ENCODE measurements at regions of chr4 and their contacts with region 1.

Region 1: DNA sequence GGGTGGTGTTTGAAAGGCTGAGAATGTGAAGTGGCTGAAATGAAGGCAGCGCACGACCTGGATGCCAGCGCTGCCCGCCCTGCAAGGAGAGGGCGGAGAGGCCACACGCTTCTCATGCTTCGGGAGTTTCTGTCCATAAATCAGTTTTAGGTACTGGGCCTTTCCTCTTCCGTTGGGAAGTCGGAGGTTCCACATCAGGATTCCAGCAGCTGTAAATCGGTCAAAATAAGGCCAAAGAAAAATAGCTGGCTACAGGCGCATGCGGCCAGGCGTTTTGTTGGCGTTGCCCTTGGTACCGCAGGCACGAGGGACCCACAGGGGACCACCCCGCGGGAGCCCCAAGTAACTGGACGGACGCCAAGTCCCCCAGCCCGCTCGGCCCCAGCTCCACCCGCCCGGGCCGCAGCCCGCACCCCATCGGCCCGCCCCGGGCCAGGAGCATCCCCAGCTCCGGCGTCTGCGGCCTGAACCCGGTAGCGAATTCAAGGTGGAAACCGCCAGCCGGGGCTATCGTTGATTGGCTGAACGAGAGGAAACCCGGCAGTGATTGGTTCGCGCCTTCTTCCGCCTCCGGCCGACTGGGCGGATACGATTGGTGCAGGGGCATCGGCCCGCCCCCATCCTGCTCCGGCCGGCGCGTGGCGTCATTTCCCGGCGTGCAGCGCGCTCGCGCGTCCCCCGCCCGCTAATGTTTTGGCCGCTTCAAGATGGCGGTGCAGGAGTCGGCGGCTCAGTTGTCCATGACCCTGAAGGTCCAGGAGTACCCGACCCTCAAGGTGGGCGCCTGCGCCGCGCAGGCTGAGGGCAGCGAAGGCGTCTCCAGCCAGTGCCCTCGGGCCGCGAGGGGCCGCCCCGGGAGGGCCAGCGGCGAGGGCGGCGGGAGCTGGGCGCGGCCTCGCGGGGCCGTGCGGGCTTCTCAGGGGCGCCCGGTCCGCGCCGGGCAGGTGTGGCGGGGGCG is at the start of gene MAEA:
- DNase-seq: peak; percentile 98
- H3K4me3 Mint-ChIP-seq: peak within 1 kb of the TSS; percentile 94
- H3K27ac Mint-ChIP-seq: peak within 1 kb of the TSS; percentile 90
- H3K4me1 Mint-ChIP-seq: peaks cover 39% of the 10 kb centered on the region
- H3K27me3 Mint-ChIP-seq: no peaks in the 10 kb centered on the region
- total RNA-seq, gene MAEA: 61.6 to 64.1 TPM

Region 2: DNA sequence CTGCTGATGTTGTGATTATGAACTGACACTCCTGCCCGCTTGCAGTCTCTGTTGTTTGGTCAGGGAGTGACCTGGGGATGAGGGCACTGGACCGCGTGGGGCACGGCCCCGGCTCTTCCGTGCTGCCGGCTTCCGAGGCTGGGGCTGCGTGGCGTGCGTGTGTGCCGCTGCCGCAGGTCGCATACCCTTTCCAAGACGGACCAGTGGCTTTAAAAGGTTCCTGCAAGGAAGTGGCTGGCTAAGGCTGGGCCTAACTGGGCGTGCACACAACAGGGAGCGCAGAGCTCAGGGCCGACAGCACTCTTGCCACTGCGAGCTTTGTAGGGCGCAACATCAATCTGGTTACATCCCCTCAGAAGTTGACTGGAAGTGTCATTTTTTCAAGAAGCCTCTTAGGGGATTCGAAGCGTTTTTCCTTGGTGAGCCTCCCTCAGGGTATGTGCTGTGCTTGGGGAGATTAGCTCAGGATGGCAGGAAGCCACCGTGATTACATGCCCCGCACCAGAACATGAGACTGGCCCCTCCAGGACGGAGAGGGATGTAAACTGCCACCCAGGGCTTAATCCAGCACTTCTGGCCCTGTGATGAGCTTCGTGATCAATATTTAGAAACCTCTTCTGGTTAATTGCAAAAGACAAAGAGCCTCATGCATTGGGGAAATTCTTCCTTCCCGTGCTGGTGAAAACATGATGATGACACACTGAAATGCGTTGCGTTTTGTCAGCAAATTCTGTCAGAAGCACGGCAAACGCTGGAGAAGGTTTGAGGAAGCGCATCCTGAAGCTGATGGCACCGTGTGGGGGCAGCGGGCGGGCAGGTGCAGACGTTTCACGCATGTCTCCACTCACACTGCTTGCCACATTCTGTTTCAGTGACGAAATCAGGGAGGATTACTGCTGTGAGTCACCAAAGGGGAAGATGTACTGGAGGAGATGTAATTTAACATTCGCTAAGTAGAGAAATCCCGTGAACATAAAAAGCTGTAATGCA is 11.3 kb after region 1 on chr4:
- CTCF ChIA-PET with region 1: interaction called, 3 read pairs
- POLR2A ChIA-PET with region 1: interaction called, 22 read pairs
- DNase-seq: peak; percentile 56
- H3K4me3 Mint-ChIP-seq: no peak overlapping the region
- H3K27ac Mint-ChIP-seq: peak overlapping the region; percentile 54
- H3K4me1 Mint-ChIP-seq: peaks cover 48% of the 10 kb centered on the region
- H3K27me3 Mint-ChIP-seq: no peaks in the 10 kb centered on the region

Region 3: DNA sequence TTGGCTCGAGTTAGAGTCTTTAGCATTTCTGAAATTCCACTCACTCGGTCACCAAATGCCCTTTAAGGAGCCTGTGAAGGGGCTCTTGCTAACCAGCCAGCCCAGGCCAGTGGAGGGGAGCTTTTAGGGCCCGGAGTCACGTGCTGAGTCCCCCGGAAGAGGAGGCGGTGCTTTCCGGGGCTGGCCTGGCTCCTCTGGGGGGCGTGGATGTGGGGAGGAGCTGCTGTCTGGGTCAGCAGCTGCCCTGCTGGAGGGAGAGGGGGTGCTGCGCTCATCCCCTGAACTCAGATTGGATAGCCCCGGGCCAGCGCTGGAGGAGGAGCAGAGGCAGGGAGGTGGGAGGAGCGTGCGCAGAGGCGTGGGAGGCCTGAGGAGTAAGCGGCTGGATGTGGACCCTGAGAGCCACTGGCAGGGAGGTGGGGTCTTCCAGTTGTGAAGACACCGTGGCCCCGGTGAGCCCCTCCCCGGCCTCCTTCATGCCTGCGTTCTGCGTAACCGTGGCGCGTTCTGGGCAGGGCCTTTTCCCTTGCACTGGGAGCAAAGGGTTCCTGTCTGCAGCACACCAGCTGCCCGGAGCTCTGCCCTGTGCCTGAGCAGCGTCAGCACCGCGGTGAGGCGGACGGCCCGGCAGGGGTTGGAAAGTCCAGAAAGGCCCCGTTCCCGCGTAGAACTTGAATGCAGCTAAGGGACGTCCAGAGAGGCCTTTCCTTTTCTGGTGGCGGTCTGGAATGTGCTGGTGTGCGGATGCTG is 19.9 kb after region 1 on chr4:
- CTCF ChIA-PET with region 1: no interaction called
- POLR2A ChIA-PET with region 1: interaction called, 44 read pairs
- DNase-seq: peak; percentile 59
- H3K4me3 Mint-ChIP-seq: peak overlapping the region; percentile 45
- H3K27ac Mint-ChIP-seq: peak overlapping the region; percentile 60
- H3K4me1 Mint-ChIP-seq: peaks cover 72% of the 10 kb centered on the region
- H3K27me3 Mint-ChIP-seq: no peaks in the 10 kb centered on the region

Region 4: GRCh38 chr4:1329408-1330371 is 40.2 kb after region 1 on chr4:
- CTCF ChIA-PET with region 1: interaction called, 8 read pairs
- POLR2A ChIA-PET with region 1: interaction called, 26 read pairs
- DNase-seq: no peak
- H3K4me3 Mint-ChIP-seq: peak overlapping the region; percentile 40
- H3K27ac Mint-ChIP-seq: peak overlapping the region; percentile 85
- H3K4me1 Mint-ChIP-seq: peaks cover 36% of the 10 kb centered on the region
- H3K27me3 Mint-ChIP-seq: no peaks in the 10 kb centered on the region

Region 5: GRCh38 chr4:1395941-1396806 is 106.7 kb after region 1 on chr4:
- CTCF ChIA-PET with region 1: no interaction called
- POLR2A ChIA-PET with region 1: no interaction called
- DNase-seq: no peak
- H3K4me3 Mint-ChIP-seq: no peak overlapping the region
- H3K27ac Mint-ChIP-seq: no peak overlapping the region
- H3K4me1 Mint-ChIP-seq: no peaks in the 10 kb centered on the region
- H3K27me3 Mint-ChIP-seq: peaks cover 5% of the 10 kb centered on the region

Region 6: GRCh38 chr4:1644891-1645657 is 355.6 kb after region 1 on chr4:
- CTCF ChIA-PET with region 1: no interaction called
- POLR2A ChIA-PET with region 1: no interaction called
- DNase-seq: no peak
- H3K4me3 Mint-ChIP-seq: no peak overlapping the region
- H3K27ac Mint-ChIP-seq: no peak overlapping the region
- H3K4me1 Mint-ChIP-seq: peaks cover 3% of the 10 kb centered on the region
- H3K27me3 Mint-ChIP-seq: no peaks in the 10 kb centered on the region

Measured in activated CD4-positive, alpha-beta memory T cell treated with anti-CD3 and anti-CD28 coated beads, Interleukin-2, amount 10 ng/mL, durations not matched to agents 7 days and 5 days (primary cell).